ENCODE measurements at regions of chr5 and their contacts with region 1.

Region 1: DNA sequence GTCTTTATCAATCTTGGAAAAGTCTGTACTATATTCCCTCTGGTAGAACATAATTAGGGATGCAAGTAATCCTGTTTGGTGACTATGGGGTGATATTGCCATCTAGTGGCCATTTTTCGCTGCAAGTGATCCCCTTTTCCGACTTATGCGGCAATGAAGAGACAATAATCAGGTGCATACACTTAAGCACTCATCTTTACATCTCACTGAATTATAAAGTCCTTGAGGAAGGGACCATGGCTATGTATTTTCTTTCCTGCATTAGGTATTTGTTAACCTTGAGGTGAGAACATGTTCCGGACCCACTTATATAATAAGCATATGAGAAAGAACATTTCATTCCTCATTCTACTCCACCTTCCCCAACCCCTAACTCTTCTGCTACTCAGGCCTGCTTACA is 19.6 kb upstream of the LIX1 start:
- DNase-seq: peak; percentile 44
- ATAC-seq: peak; percentile 82
- H3K4me3 ChIP-seq: no peak overlapping the region
- H3K27ac ChIP-seq: no peak overlapping the region
- H3K4me1 ChIP-seq: no peaks in the 10 kb centered on the region; the same call in 1 of the 2 replicates
- H3K27me3 ChIP-seq: no peaks in the 10 kb centered on the region
- CTCF ChIP-seq: peak; percentile 77 to 84 (median 82)
- EP300 ChIP-seq: no peak
- POLR2A ChIP-seq: no peak
- RAD21 ChIP-seq: peak; percentile 85

Region 2: DNA sequence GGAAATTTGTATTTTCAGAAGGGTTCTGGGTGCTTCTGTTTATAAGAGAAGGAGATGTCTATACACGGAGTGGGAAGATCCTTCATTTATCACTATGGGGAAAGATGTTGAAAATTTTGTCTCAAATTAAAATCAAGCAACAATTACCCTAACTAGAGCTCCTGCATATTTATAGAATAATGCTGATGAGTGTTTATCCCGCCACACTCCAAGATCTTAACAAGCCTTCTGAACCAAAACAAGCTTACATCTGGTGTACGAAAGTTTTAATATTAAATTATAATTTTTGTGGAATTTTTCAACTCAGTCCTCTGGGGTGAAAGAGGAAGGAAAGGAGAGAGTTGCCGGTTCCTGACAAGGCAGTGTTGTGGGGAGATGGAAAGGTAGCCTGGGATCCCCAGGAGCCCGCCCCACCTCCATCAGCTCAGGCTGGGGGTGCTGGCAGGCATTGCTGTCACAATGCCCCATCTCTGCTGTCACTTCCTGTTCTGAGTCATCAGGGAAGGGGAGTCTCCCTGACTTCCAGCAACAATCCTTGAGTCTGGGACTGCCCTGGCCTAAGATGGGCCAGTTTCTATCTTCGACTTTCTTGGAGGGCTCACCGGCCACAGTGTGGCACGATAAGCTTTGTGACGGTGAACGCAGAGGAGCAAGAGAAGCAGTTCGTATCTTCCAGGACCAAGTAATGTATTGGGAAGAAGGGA is 418.8 kb before region 1 on chr5:
- CTCF ChIA-PET with region 1: interaction called, 11 read pairs
- POLR2A ChIA-PET with region 1: no interaction called
- RAD21 ChIA-PET with region 1: interaction called, 6 read pairs
- SMC1A ChIA-PET with region 1: interaction called, 9 read pairs
- in situ Hi-C with region 1: loop called (anchors 5 kb)
- intact Hi-C with region 1: no loop called
- DNase-seq: no peak
- ATAC-seq: no peak
- H3K4me3 ChIP-seq: no peak overlapping the region
- H3K27ac ChIP-seq: no peak overlapping the region
- H3K4me1 ChIP-seq: no peaks in the 10 kb centered on the region
- H3K27me3 ChIP-seq: no peaks in the 10 kb centered on the region
- CTCF ChIP-seq: no peak
- EP300 ChIP-seq: no peak
- POLR2A ChIP-seq: no peak
- RAD21 ChIP-seq: no peak

Region 3: DNA sequence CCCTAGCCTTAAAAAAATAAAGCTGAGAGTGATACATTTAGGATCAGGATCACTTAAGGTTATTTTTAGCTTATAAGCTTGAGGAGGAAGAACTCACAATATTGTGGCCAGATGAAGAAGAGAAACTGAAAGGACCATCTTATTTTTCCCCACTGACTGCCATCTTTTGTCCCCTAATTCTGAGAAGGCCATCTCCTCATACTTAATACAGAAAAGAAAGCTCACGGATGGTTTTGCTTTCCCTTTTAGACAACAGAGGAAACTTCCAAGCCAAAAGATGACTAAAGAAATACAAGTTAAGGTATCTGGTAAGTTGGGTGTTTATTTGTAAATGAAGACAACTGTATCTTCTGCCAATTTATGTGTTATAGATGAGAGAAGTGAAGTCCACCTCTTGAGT is 390.6 kb before region 1 on chr5:
- CTCF ChIA-PET with region 1: interaction called, 12 read pairs
- POLR2A ChIA-PET with region 1: no interaction called
- RAD21 ChIA-PET with region 1: interaction called, 3 read pairs
- SMC1A ChIA-PET with region 1: interaction called, 5 read pairs
- in situ Hi-C with region 1: no loop called
- intact Hi-C with region 1: no loop called
- DNase-seq: no peak
- ATAC-seq: peak; percentile 36; the same call in 1 of the 3 replicates
- H3K4me3 ChIP-seq: no peak overlapping the region
- H3K27ac ChIP-seq: no peak overlapping the region
- H3K4me1 ChIP-seq: no peaks in the 10 kb centered on the region
- H3K27me3 ChIP-seq: no peaks in the 10 kb centered on the region
- CTCF ChIP-seq: no peak
- EP300 ChIP-seq: no peak
- POLR2A ChIP-seq: no peak
- RAD21 ChIP-seq: no peak

Region 4: DNA sequence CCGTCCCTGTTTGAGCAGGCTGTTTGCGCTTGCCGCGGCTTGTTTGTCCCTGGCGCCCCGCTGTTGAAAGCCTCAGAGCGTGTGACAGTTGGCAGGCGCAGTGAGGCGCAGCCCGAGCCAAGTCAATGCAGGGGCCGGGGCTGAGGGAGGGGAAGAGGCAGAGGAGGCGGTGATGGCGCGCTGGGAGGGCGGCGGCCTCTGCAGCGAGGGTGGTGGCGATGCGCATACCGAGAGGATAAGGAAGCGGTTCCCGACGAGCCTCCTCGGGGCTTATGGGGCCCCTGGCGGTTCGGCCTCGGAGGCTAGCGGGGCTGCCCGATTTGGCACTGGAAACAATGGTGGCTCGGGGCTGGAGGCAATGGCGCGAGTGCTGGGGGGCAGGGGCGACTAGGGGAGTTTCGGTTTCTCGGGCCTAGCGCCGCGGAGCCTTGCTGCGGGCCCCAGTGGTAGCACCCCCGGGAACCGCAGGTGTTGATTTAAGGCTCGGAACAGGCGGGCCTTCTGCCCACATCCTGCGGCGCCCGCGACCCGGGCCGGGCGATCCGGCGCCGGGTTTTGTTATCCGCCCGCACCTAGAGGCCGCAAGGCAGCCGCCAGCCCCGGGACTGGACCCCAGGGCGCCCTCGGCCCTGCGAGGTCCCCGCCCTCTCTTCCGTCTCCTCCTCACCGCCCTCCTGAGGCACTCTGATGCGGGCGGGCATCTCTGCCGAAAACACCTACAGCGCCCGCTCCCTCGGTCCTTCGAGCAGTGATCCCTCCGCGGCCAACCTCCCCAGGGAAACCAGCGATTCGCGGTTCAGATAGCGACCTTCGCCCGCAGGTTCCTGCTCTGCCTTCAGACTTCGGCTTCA is 227.1 kb before region 1 on chr5:
- CTCF ChIA-PET with region 1: interaction called, 4 read pairs
- POLR2A ChIA-PET with region 1: no interaction called
- RAD21 ChIA-PET with region 1: interaction called, 6 read pairs
- SMC1A ChIA-PET with region 1: interaction called, 3 read pairs
- in situ Hi-C with region 1: no loop called
- intact Hi-C with region 1: loop called (anchors 5 kb)
- DNase-seq: peak; percentile 86
- ATAC-seq: peak; percentile 77
- H3K4me3 ChIP-seq: peak overlapping the region; percentile 94
- H3K27ac ChIP-seq: peak overlapping the region; percentile 97
- H3K4me1 ChIP-seq: peaks cover 14% of the 10 kb centered on the region
- H3K27me3 ChIP-seq: no peaks in the 10 kb centered on the region
- CTCF ChIP-seq: no peak
- EP300 ChIP-seq: peak; percentile 26 to 74; a peak in 2 of 4 replicates
- POLR2A ChIP-seq: peak; percentile 85
- RAD21 ChIP-seq: no peak

Region 5: DNA sequence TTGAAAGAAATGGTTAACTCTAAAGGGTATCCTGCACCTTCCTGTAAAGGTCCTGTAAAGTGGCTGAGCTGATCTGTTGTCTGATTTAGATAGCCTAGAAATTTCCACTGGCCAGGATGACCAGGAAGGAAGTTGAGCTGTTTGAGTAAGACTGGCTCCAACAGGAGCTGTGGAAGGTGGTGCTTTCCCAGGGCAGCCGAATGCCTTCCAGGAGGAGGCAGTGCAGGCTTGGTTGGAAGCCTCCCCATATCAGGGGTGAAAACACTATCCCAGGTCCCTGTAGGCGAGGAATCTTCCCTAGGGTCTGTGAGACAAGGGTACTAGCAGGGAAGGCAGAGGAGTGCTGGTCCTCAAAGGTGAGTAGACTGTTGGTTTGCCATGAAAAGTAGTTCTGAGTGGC is 118.0 kb before region 1 on chr5:
- CTCF ChIA-PET with region 1: interaction called, 22 read pairs
- POLR2A ChIA-PET with region 1: no interaction called
- RAD21 ChIA-PET with region 1: interaction called, 4 read pairs
- SMC1A ChIA-PET with region 1: interaction called, 12 read pairs
- in situ Hi-C with region 1: no loop called
- intact Hi-C with region 1: no loop called
- DNase-seq: no peak
- ATAC-seq: peak; percentile 33
- H3K4me3 ChIP-seq: no peak overlapping the region
- H3K27ac ChIP-seq: no peak overlapping the region
- H3K4me1 ChIP-seq: no peaks in the 10 kb centered on the region
- H3K27me3 ChIP-seq: no peaks in the 10 kb centered on the region; a peak in 1 of 4 replicates
- CTCF ChIP-seq: peak in 2 of 3 experiments; percentile 18; a peak in 2 of 6 replicates
- EP300 ChIP-seq: no peak
- POLR2A ChIP-seq: no peak
- RAD21 ChIP-seq: peak; percentile 45

Region 6: GRCh38 chr5:97149709-97150108 is 12.3 kb before region 1 on chr5:
- CTCF ChIA-PET with region 1: interaction called, 97 read pairs
- POLR2A ChIA-PET with region 1: no interaction called
- RAD21 ChIA-PET with region 1: interaction called, 7 read pairs
- SMC1A ChIA-PET with region 1: interaction called, 9 read pairs
- in situ Hi-C with region 1: no loop called
- intact Hi-C with region 1: no loop called
- DNase-seq: no peak
- ATAC-seq: no peak
- H3K4me3 ChIP-seq: no peak overlapping the region
- H3K27ac ChIP-seq: no peak overlapping the region
- H3K4me1 ChIP-seq: no peaks in the 10 kb centered on the region
- H3K27me3 ChIP-seq: no peaks in the 10 kb centered on the region
- CTCF ChIP-seq: no peak
- EP300 ChIP-seq: no peak
- POLR2A ChIP-seq: no peak
- RAD21 ChIP-seq: no peak

Measured in GM12878 (cell line).